HAP-1 (cell line): ENCODE measurements at regions of chr2 and their contacts with region 1.

Region 1: DNA sequence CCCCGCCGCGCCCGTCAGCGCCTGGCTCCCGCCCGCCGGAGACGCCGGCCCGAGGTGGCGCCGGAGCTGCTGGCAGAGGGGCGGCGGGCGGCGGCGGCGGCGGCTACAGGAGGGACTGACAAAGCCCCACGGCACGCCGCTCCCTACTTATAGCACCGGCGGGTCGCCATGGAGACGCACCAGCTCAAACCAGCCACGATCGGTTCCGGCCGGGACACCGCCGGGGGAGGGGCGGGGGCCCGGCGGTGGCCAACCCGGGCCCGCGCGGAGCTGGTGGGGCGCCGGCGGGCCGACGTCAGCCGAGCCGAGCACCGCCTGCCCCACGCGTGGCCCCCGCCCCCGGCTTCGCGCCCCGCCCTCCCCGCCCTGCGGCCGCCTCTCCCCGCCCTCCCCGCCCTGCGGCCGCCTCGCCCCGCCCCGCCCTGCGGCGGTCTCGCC is at the start of gene ODC1:
- DNase-seq: peak; percentile 84 to 98
- H3K4me3 ChIP-seq: peak within 1 kb of the TSS; percentile 54
- H3K4me1 ChIP-seq: peaks cover 16% of the 10 kb centered on the region
- H3K27me3 ChIP-seq: no peaks in the 10 kb centered on the region

Region 2: DNA sequence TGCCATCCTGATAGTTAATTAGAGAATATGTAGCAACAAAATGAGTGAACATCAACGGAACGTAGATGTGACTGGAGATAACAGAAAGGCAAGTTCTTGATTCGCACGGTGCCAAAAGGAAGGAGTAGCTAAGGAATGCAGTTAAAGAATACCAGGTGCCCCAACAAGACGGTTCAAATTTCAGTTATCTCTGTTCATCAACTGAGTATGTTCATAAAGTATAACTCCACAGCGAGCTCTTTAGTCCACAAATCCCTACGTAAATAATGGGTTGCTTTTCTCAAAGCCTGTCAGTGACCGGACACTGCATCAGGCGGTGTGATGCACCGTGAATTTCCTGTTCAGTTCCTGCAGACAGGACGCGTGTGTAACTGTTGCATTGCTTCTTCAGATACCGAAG is 149.7 kb after region 1 on chr2:
- in situ Hi-C with region 1: no loop called
- DNase-seq: no peak
- H3K4me3 ChIP-seq: no peak overlapping the region
- H3K4me1 ChIP-seq: no peaks in the 10 kb centered on the region
- H3K27me3 ChIP-seq: no peaks in the 10 kb centered on the region

Region 3: DNA sequence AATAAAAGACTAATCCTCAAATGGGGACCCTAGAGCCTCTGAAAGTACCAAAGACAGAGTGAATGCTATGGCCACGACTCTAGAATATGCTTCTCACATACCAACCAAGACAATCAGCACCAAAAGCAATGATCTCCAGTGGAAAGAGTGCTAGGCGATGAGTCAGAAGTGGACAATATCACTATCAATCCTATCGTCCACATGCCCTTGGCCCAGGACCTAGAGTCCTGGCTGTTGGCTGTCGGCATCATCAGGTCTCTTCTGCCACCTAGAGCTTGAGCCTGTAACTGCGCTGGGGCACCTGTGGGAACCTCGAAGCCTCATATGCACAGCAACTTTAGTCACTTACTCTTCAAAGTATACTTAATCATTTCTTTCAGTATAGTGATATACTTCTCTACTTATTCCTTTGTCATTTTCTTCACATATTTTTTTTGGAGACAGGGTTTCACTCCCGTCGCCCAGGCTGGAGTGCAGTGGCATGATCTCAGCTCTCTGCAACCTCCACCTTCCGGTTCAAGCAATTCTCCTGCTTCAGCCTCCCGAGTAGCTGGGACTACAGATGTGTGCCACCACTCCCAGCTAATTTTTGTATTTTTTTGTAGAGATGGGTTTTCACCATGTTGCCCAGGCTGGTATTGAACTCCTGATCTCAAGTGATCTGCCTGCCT is 211.8 kb after region 1 on chr2:
- in situ Hi-C with region 1: loop called (anchors 10 kb)
- DNase-seq: peak in 1 of 2 experiments; percentile 67
- H3K4me3 ChIP-seq: no peak overlapping the region
- H3K4me1 ChIP-seq: no peaks in the 10 kb centered on the region
- H3K27me3 ChIP-seq: no peaks in the 10 kb centered on the region